ENCODE measurements at regions of chr1 and their contacts with region 1.

Region 1: GRCh38 chr1:64675718-64676345 is 69.0 kb upstream of the RAVER2 start:
- DNase-seq: peak in 1 of 3 donors; percentile 12
- ATAC-seq: no peak
- H3K4me3 ChIP-seq: no peak overlapping the region
- H3K4me1 ChIP-seq: no peaks in the 10 kb centered on the region
- CTCF ChIP-seq: no peak

Region 2: GRCh38 chr1:64268653-64269557 is 406.9 kb before region 1 on chr1:
- intact Hi-C with region 1: loop called (anchors 10 kb)
- DNase-seq: peak in 1 of 3 donors; percentile 78
- ATAC-seq: peak; percentile 84
- H3K4me3 ChIP-seq: no peak overlapping the region
- H3K4me1 ChIP-seq: no peaks in the 10 kb centered on the region
- CTCF ChIP-seq: peak; percentile 21

Measured in mucosa of descending colon (tissue), 3 donors.